CD4-positive, alpha-beta memory T cell (primary cell): ENCODE measurements at regions of chr21 and their contacts with region 1.

Region 1: DNA sequence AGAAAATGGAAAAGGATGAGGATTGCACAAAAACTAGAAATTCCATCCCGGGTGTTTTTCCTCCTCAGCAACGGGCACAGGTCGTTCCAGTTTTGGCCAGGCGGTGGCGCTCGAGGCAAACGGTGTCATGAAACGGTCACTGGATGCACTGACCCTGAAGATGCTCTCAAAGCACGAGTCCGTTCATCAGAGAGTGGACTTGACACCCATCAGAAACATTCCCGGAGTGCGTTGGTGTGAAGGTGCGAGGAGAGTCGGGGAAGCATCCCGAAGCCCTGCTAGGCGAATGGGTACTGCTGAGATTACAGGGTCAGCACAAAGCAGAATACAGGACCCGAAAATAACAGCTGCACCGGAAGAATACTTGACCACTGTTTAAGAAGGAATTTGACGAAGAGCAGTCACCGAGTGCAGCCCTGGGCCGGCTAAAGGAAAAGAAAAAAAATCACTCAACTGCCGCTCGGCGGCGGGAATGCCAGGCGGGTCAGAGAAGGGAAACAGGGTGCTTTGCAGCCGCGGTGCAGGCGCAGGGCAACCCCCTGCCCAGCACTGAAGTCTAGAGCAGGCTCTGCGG is 71.7 kb upstream of the ETS2 start:
- DNase-seq: peak; percentile 35 to 64 (median 51)
- H3K4me3 ChIP-seq: peak overlapping the region in 1 of 2 donors; percentile 53
- H3K4me3 Mint-ChIP-seq: peak overlapping the region; percentile 60 to 89 (median 74)
- H3K27ac ChIP-seq: no peak overlapping the region
- H3K27ac Mint-ChIP-seq: no peak overlapping the region
- H3K4me1 ChIP-seq: peaks cover 8% of the 10 kb centered on the region
- H3K4me1 Mint-ChIP-seq: peaks cover 5 to 10% (median 7%) of the 10 kb centered on the region in 4 donors
- H3K27me3 ChIP-seq: peaks cover 3% of the 10 kb centered on the region
- H3K27me3 Mint-ChIP-seq: peaks cover 13 to 20% of the 10 kb centered on the region in 2 donors

Region 2: DNA sequence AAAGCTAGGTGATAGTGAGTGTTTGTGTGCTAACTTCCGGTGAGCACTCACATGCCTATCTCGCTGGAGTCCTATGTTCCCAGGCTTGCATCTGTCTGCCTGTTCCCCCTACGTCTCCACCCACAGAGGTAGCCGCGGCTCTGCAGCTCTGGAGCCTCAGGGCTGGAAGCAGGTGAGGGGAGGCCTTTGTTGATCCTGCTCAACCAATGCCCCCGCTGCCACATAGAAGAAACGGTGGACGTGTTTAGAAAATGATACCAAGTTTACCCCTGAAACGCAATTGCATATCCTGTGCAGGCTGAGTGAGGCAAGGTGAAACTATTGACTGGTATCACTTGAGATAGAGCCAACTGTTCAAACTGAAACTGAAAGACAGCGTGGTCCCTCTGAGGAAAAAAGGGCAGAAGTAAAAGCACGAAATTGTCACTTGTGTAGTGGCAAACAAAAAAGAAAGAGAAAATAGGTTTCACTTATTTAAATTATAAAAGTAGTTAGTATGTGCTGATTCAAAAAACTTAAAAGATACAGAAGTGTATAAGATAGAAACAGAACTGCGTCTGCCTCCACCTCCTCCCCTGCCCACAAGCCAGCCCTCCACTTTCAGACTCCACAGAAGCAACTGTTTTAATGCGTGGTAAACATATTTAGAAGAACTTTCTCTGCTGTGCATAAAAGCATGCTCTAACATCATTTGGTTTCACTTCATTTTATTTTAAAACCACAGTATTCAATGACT is 33.1 kb after region 1 on chr21:
- CTCF ChIA-PET with region 1: interaction called, 9 read pairs
- POLR2A ChIA-PET with region 1: no interaction called
- intact Hi-C with region 1: loop called (anchors 2 kb)
- DNase-seq: peak; percentile 69 to 80 (median 74)
- H3K4me3 ChIP-seq: peak overlapping the region; percentile 63 to 71
- H3K4me3 Mint-ChIP-seq: peak overlapping the region; percentile 85 to 96 (median 92)
- H3K27ac ChIP-seq: peak overlapping the region; percentile 72
- H3K27ac Mint-ChIP-seq: peak overlapping the region; percentile 86 to 96 (median 91)
- H3K4me1 ChIP-seq: peaks cover 27% of the 10 kb centered on the region
- H3K4me1 Mint-ChIP-seq: peaks cover 22 to 35% (median 31%) of the 10 kb centered on the region in 4 donors
- H3K27me3 ChIP-seq: no peaks in the 10 kb centered on the region
- H3K27me3 Mint-ChIP-seq: no peaks in the 10 kb centered on the region

Region 3: GRCh38 chr21:38805328-38806152 is 71.5 kb after region 1 on chr21 and contains the start of gene ETS2:
- CTCF ChIA-PET with region 1: interaction called, 19 read pairs
- POLR2A ChIA-PET with region 1: no interaction called
- intact Hi-C with region 1: loop called (anchors 2 kb)
- DNase-seq: peak; percentile 59 to 79 (median 65)
- H3K4me3 ChIP-seq: peak within 1 kb of the TSS; percentile 62 to 82
- H3K4me3 Mint-ChIP-seq: peak within 1 kb of the TSS; percentile 87 to 94 (median 90)
- H3K27ac ChIP-seq: peak within 1 kb of the TSS; percentile 59
- H3K27ac Mint-ChIP-seq: peak within 1 kb of the TSS; percentile 65 to 95 (median 83)
- H3K4me1 ChIP-seq: peaks cover 32% of the 10 kb centered on the region
- H3K4me1 Mint-ChIP-seq: peaks cover 24 to 35% (median 30%) of the 10 kb centered on the region in 4 donors
- H3K27me3 ChIP-seq: no peaks in the 10 kb centered on the region
- H3K27me3 Mint-ChIP-seq: no peaks in the 10 kb centered on the region
- total RNA-seq, gene ETS2: 14.6 to 15.2 TPM

Region 4: GRCh38 chr21:39137248-39138178 is 403.5 kb after region 1 on chr21:
- CTCF ChIA-PET with region 1: interaction called, 48 read pairs
- POLR2A ChIA-PET with region 1: no interaction called
- intact Hi-C with region 1: loop called (anchors 1 kb)
- DNase-seq: no peak
- H3K4me3 ChIP-seq: no peak overlapping the region
- H3K4me3 Mint-ChIP-seq: no peak overlapping the region
- H3K27ac ChIP-seq: no peak overlapping the region
- H3K27ac Mint-ChIP-seq: no peak overlapping the region
- H3K4me1 ChIP-seq: no peaks in the 10 kb centered on the region
- H3K4me1 Mint-ChIP-seq: no peaks in the 10 kb centered on the region
- H3K27me3 ChIP-seq: no peaks in the 10 kb centered on the region
- H3K27me3 Mint-ChIP-seq: peaks cover 2 to 9% of the 10 kb centered on the region in 2 donors

Region 5: GRCh38 chr21:39175154-39175553 is 441.1 kb after region 1 on chr21:
- CTCF ChIA-PET with region 1: interaction called, 9 read pairs
- POLR2A ChIA-PET with region 1: no interaction called
- intact Hi-C with region 1: loop called (anchors 1 kb)
- DNase-seq: peak in 3 of 5 donors; percentile 8 to 22 (median 14)
- H3K4me3 ChIP-seq: no peak overlapping the region
- H3K4me3 Mint-ChIP-seq: no peak overlapping the region
- H3K27ac ChIP-seq: no peak overlapping the region
- H3K27ac Mint-ChIP-seq: peak overlapping the region in 2 of 7 donors; percentile 32 to 39
- H3K4me1 ChIP-seq: no peaks in the 10 kb centered on the region
- H3K4me1 Mint-ChIP-seq: peaks cover 5 to 21% (median 8%) of the 10 kb centered on the region in 4 donors
- H3K27me3 ChIP-seq: no peaks in the 10 kb centered on the region
- H3K27me3 Mint-ChIP-seq: no peaks in the 10 kb centered on the region

Region 6: DNA sequence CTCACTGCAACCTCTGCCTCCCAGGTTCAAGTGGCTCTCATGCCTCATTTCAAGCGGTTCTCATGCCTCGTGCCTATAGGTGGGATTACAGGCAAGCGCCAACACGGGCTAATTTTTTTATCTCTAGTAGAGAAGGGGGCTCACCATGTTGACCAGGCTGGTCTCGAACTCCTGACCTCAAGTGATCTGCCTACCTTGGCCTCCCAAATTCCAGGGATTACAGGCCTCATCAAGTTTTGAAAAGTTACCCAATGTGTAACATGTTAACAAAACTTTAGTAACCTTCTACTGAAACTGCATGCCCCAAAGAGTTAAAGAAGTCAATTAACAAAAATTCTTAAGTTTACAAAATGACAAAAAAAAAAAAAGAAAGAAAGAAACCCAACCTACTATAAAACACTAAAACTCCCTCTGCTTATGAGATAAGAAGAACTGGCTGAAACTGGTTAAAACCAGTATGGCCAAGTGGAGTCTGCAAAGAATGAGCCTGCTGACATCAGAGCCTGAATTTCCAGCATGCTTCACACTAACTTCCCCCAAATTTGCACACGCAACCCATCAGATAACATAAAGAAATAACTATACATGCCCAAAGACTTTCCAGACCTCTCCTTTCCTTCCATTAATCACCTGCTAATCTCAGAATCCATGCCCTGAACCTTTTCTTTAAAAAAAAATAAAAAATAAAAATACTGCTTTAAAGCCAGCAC is 474.7 kb after region 1 on chr21:
- CTCF ChIA-PET with region 1: no interaction called
- POLR2A ChIA-PET with region 1: no interaction called
- intact Hi-C with region 1: no loop called
- DNase-seq: peak in 1 of 5 donors; percentile 38
- H3K4me3 ChIP-seq: no peak overlapping the region
- H3K4me3 Mint-ChIP-seq: peak overlapping the region in 1 of 8 donors; percentile 40
- H3K27ac ChIP-seq: no peak overlapping the region
- H3K27ac Mint-ChIP-seq: peak overlapping the region; percentile 4 to 86 (median 62)
- H3K4me1 ChIP-seq: peaks cover 27% of the 10 kb centered on the region
- H3K4me1 Mint-ChIP-seq: peaks cover 26 to 44% (median 34%) of the 10 kb centered on the region in 4 donors
- H3K27me3 ChIP-seq: no peaks in the 10 kb centered on the region
- H3K27me3 Mint-ChIP-seq: no peaks in the 10 kb centered on the region